ENCODE measurements at regions of chr1 and their contacts with region 1.

Region 1: GRCh38 chr1:39973503-39974135 is 18.7 kb downstream of the MFSD2A start:
- DNase-seq: peak; percentile 78
- ATAC-seq: peak; percentile 77
- H3K4me3 Mint-ChIP-seq: no peak overlapping the region
- H3K27ac Mint-ChIP-seq: no peak overlapping the region
- H3K4me1 Mint-ChIP-seq: peaks cover 5% of the 10 kb centered on the region
- H3K27me3 Mint-ChIP-seq: no peaks in the 10 kb centered on the region

Region 2: DNA sequence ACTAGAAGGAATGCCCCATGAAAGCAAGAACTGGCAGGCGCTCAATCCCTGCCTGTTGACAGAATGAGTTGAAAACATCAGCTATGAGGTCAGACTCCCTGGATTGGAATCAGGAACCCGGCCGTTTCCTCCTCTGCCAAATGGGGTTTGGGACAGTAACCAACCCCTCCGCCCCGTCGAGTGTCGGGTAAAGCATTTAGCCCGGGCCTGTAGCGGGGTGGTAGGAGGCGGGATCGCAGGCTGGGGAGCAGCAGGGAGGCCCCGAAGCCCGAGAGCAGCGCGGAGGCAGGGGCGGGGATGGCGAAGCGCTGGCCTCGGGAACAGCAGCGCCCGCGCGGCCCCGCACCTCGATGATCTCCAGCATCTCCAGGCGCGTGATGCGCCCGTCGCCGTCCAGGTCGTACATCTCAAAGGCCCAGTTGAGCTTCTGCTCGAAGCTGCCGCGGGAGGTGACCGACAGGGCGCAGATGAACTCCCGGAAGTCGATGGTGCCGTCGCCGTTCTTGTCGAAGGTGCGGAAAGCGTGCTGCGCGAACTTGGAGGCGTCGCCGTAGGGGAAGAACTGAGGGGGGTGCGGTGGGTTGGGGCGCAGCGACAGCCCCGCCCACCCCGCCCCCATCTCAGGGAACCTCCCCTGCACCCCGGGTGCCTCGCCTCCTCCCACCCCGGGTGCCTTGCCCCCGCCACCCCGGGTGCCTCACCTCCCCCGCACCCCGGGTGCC is 289.9 kb before region 1 on chr1:
- CTCF ChIA-PET with region 1: no interaction called
- POLR2A ChIA-PET with region 1: no interaction called
- DNase-seq: peak; percentile 45
- ATAC-seq: peak; percentile 11
- H3K4me3 Mint-ChIP-seq: no peak overlapping the region
- H3K27ac Mint-ChIP-seq: no peak overlapping the region
- H3K4me1 Mint-ChIP-seq: peaks cover 12% of the 10 kb centered on the region
- H3K27me3 Mint-ChIP-seq: peaks cover 30% of the 10 kb centered on the region

Region 3: DNA sequence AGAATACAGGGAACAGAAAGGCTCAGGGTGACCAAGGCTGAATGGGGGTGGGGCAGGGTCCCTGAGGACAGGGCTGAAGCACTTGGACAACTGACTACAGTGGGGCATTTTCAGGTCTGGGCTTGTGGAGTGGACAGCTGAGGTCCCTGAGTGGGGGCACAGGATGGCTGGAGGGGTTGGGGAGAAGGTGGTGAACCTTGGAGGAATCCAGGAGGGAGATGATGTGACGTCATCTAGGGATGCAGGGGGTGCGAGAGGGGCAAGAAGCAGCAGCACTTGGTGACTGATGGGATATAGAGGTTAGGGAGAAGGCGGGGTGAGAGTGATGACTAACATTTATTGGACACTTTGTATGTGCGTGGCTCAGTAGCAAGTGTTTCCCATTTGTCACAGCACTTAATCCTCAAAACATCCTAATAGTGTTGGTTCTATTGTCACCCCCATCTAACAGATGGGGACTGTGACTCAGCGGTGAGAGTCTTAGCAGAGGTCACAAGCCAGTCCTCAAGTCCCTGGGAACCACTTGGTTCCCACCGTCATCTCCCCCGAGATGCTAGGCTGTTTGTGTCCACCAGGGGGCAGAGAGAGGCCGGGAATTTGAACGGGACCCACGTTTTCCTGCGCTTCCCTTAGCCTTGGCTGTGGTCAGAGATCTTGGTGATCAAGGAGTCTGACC is 157.1 kb before region 1 on chr1:
- CTCF ChIA-PET with region 1: interaction called, 34 read pairs
- POLR2A ChIA-PET with region 1: no interaction called
- DNase-seq: peak; percentile 63
- ATAC-seq: peak; percentile 71
- H3K4me3 Mint-ChIP-seq: peak overlapping the region; percentile 44
- H3K27ac Mint-ChIP-seq: no peak overlapping the region
- H3K4me1 Mint-ChIP-seq: peaks cover 7% of the 10 kb centered on the region
- H3K27me3 Mint-ChIP-seq: peaks cover 30% of the 10 kb centered on the region

Region 4: DNA sequence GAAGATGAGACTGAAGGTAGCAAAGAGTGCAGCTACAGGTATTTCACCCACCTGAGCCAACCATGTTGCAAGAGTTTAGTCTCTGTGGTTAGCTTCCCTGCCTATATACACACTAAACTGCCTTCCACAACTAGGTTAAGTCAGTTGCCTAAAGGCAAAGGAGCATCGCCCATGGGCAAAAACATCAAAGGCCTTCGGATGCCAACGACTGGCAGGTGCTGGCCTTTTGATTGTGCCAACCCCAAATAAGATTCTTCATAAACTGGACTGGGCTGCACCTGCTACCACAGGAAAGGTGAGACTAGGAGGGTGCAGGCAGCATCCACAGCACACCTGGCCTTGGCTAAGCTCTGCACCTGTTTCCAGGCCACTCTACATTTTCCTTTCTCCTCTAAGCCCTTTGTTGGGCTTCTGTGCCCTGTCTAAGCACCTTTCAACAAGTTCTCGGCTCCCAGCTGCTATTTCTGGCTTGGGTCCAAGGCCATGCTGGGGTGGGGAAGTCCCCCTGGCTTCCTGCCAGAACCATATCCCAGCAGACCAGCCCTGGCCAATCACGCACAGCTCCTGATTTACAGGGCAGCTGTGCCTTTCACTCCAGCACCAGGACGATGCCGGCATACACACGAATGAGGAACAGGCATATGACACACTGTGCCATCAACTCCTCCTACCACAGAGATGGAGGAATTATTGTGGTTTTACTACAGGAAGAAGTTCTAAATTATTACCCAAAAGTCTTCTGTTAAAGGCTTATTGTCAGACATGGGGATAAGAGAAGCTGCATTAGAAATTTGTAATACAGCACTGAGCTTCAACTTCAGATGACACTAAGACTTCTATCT is 128.1 kb before region 1 on chr1:
- CTCF ChIA-PET with region 1: interaction called, 10 read pairs
- POLR2A ChIA-PET with region 1: no interaction called
- DNase-seq: peak; percentile 63
- ATAC-seq: peak; percentile 86
- H3K4me3 Mint-ChIP-seq: no peak overlapping the region
- H3K27ac Mint-ChIP-seq: peak overlapping the region; percentile 73
- H3K4me1 Mint-ChIP-seq: peaks cover 38% of the 10 kb centered on the region
- H3K27me3 Mint-ChIP-seq: no peaks in the 10 kb centered on the region

Region 5: DNA sequence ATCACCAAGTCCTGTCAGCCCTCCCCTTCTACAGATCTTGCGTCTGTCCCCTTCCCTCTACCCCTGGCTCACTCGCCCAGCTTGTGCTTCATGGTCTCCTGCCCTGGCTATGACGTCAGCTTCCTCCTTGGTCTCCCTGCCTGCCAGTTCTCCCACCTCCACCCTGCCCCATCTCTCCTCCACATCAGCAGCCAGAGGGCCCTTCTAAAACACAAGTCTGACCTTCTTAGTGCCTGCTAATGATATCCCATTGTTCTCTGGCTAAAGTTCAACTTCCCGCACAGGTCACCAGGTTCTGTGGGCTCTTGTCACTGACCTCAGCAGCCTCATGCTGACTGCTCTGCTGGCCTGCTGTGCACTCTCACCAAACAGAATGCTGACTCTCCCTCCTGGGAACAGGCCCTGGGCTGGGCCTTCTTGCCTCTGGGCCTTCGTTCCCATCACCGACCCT is 47.3 kb before region 1 on chr1:
- CTCF ChIA-PET with region 1: interaction called, 99 read pairs
- POLR2A ChIA-PET with region 1: no interaction called
- DNase-seq: no peak
- ATAC-seq: no peak
- H3K4me3 Mint-ChIP-seq: no peak overlapping the region
- H3K27ac Mint-ChIP-seq: no peak overlapping the region
- H3K4me1 Mint-ChIP-seq: peaks cover 5% of the 10 kb centered on the region
- H3K27me3 Mint-ChIP-seq: no peaks in the 10 kb centered on the region

Region 6: GRCh38 chr1:39954816-39955546 is 18.6 kb before region 1 on chr1 and contains the start of gene MFSD2A:
- CTCF ChIA-PET with region 1: interaction called, 10 read pairs
- POLR2A ChIA-PET with region 1: no interaction called
- DNase-seq: peak; percentile 90
- ATAC-seq: peak; percentile 96
- H3K4me3 Mint-ChIP-seq: peak within 1 kb of the TSS; percentile 91
- H3K27ac Mint-ChIP-seq: peak within 1 kb of the TSS; percentile 81
- H3K4me1 Mint-ChIP-seq: peaks cover 23% of the 10 kb centered on the region
- H3K27me3 Mint-ChIP-seq: peaks cover 2% of the 10 kb centered on the region
- total RNA-seq, gene MFSD2A: 4.1 TPM

Region 7: GRCh38 chr1:39995973-39996393 is 22.4 kb after region 1 on chr1:
- CTCF ChIA-PET with region 1: no interaction called
- POLR2A ChIA-PET with region 1: no interaction called
- DNase-seq: peak; percentile 28
- ATAC-seq: peak; percentile 70
- H3K4me3 Mint-ChIP-seq: no peak overlapping the region
- H3K27ac Mint-ChIP-seq: peak overlapping the region; percentile 20
- H3K4me1 Mint-ChIP-seq: peaks cover 12% of the 10 kb centered on the region
- H3K27me3 Mint-ChIP-seq: no peaks in the 10 kb centered on the region

Region 8: DNA sequence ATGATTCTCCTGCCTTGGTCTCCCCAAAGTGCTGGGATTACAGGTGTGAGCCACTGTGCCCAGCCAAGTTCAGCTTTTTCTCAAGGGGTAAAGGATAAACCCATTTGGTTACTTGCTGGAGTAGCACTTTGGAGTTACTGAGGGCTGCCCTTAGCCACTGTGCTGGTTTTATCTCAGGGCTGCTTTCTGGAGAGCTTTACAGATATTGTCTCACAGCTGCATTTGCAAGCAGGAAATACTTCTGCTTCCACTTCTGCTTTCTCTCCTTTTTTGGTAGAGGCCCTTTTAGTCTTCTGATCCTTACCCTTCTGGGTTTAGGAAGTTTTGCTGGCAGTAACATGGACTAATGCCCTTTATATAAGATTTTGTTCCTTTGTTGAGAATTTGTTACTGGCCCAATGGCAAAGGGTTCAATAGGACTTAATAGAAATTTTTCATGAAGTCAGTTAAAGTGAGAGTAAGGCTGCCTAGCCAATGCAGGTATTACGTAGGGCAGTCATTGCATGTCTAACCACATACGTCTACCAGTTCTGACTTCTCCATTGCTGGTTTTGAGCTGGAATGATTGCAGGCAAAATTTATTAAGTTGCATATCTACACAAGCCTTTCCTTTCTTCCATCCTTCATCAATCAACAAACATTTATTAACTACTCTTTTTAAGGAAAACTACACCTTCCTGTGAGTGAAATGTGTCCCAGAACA is 91.3 kb after region 1 on chr1:
- CTCF ChIA-PET with region 1: no interaction called
- POLR2A ChIA-PET with region 1: no interaction called
- DNase-seq: no peak
- ATAC-seq: no peak
- H3K4me3 Mint-ChIP-seq: peak overlapping the region; percentile 9
- H3K27ac Mint-ChIP-seq: peak overlapping the region; percentile 85
- H3K4me1 Mint-ChIP-seq: peaks cover 63% of the 10 kb centered on the region
- H3K27me3 Mint-ChIP-seq: no peaks in the 10 kb centered on the region

Region 9: GRCh38 chr1:40161125-40161887 is 187.7 kb after region 1 on chr1 and contains the start of gene RLF:
- CTCF ChIA-PET with region 1: no interaction called
- POLR2A ChIA-PET with region 1: no interaction called
- DNase-seq: peak; percentile 96
- ATAC-seq: peak; percentile 96
- H3K4me3 Mint-ChIP-seq: no peak within 1 kb of the TSS
- H3K27ac Mint-ChIP-seq: peak within 1 kb of the TSS; percentile 36
- H3K4me1 Mint-ChIP-seq: peaks cover 15% of the 10 kb centered on the region
- H3K27me3 Mint-ChIP-seq: no peaks in the 10 kb centered on the region
- total RNA-seq, gene RLF: 20.4 to 22.3 TPM